Panc1 (cell line): ENCODE measurements at regions of chr4 and their contacts with region 1.

Region 1: GRCh38 chr4:126592088-126592487 is 1040.7 kb upstream of the INTU start:
- DNase-seq: no peak
- ATAC-seq: no peak
- H3K4me3 ChIP-seq: no peak overlapping the region
- H3K27ac ChIP-seq: no peak overlapping the region
- H3K4me1 ChIP-seq: no peaks in the 10 kb centered on the region
- H3K27me3 ChIP-seq: no peaks in the 10 kb centered on the region
- CTCF ChIP-seq: peak; percentile 15; the same call in 1 of the 2 replicates

Region 2: GRCh38 chr4:126223784-126224407 is 368.2 kb before region 1 on chr4:
- CTCF ChIA-PET with region 1: no interaction called
- POLR2A ChIA-PET with region 1: no interaction called
- in situ Hi-C with region 1: no loop called
- intact Hi-C with region 1: loop called (anchors 10 kb)
- DNase-seq: no peak
- ATAC-seq: no peak
- H3K4me3 ChIP-seq: no peak overlapping the region
- H3K27ac ChIP-seq: no peak overlapping the region
- H3K4me1 ChIP-seq: no peaks in the 10 kb centered on the region
- H3K27me3 ChIP-seq: no peaks in the 10 kb centered on the region
- CTCF ChIP-seq: peak; percentile 50; the same call in 1 of the 2 replicates